Heart right ventricle (tissue), 16 donors: ENCODE measurements at regions of chr22 and their contacts with region 1.

Region 1: DNA sequence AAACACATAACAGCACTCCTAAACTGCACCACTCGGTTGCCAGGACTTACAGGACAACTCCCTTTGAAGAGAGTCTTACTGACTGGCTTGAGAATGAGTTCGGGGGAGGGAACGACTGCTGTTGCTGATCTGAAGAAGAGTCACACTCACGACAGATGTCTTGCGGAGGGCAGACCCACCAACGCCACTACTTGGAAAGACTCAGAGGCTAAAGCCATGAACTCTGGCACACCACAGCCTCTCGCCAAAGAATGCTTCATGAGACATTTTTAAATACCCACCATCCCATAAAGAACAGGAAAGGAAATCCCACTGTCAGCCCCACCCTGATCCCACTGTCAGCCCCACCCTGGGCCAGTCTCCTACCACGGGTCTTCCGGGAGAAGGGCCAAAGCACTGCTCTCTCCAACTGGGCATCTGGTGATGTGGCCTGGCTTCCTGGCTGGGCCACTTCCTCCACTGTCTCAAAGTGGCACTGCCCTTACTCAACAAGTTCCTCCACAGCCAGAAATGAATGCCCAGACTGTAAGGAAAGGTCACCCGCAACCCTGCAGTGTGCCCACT is 73.6 kb downstream of the MICAL3 start:
- DNase-seq: peak; percentile 52 to 62
- ATAC-seq: peak; percentile 46 to 79 (median 71)
- H3K4me3 ChIP-seq: no peak overlapping the region
- H3K27ac ChIP-seq: peak overlapping the region; percentile 57 to 88 (median 78)
- H3K4me1 ChIP-seq: peaks cover 21 to 82% (median 62%) of the 10 kb centered on the region in 9 donors
- H3K27me3 ChIP-seq: no peaks in the 10 kb centered on the region
- CTCF ChIP-seq: no peak

Region 2: DNA sequence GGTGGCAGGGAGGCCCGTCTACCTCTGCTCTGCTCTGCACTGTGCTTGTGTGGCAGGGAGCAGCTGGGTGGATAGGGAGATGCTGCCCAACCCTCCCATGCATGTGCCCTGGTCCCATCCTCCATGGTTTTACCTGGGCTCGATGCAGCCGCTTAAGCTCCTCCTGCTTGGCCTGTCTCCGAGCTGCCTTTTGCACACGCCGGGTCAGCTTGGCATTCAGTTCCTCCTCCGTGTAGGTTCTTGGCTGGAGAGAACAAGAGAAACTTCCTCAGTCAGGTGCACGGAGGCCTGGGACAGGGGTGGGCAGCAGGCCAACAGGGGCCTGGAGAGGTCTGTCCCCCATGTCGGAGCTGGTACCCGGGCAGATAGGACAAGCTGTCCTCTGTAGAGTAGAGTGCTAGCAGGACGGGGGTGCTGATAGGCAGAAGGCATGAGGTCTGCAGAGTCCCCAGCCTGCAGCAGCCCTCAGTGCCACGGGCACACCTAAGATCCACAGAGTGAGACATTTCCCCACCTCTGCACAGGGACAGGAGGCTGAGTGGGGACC is 140.1 kb before region 1 on chr22:
- intact Hi-C with region 1: no loop called
- DNase-seq: peak in 1 of 2 donors; percentile 36
- ATAC-seq: peak in 6 of 8 donors; percentile 13 to 81 (median 43)
- H3K4me3 ChIP-seq: no peak overlapping the region
- H3K27ac ChIP-seq: peak overlapping the region in 7 of 10 donors; percentile 12 to 53 (median 45)
- H3K4me1 ChIP-seq: peaks cover 0 to 36% (median 19%) of the 10 kb centered on the region in 9 donors
- H3K27me3 ChIP-seq: no peaks in the 10 kb centered on the region
- CTCF ChIP-seq: no peak

Region 3: GRCh38 chr22:17910561-17911311 is 40.0 kb before region 1 on chr22:
- intact Hi-C with region 1: loop called in 5 of 10 experiments (anchors 5 kb)
- DNase-seq: peak; percentile 69 to 83
- ATAC-seq: peak; percentile 87 to 96 (median 94)
- H3K4me3 ChIP-seq: peak overlapping the region in 2 of 10 donors; percentile 2 to 8
- H3K27ac ChIP-seq: peak overlapping the region; percentile 79 to 96 (median 85)
- H3K4me1 ChIP-seq: peaks cover 17 to 99% (median 69%) of the 10 kb centered on the region in 9 donors
- H3K27me3 ChIP-seq: no peaks in the 10 kb centered on the region
- CTCF ChIP-seq: peak in 8 of 9 donors; percentile 24 to 82 (median 53)

Region 4: GRCh38 chr22:17922925-17923890 is 27.5 kb before region 1 on chr22:
- intact Hi-C with region 1: loop called in 1 of 10 experiments (anchors 2 kb)
- DNase-seq: no peak
- ATAC-seq: no peak
- H3K4me3 ChIP-seq: no peak overlapping the region
- H3K27ac ChIP-seq: peak overlapping the region in 9 of 10 donors; percentile 55 to 96 (median 88)
- H3K4me1 ChIP-seq: peaks cover 16 to 97% (median 70%) of the 10 kb centered on the region in 9 donors
- H3K27me3 ChIP-seq: no peaks in the 10 kb centered on the region
- CTCF ChIP-seq: no peak

Region 5: DNA sequence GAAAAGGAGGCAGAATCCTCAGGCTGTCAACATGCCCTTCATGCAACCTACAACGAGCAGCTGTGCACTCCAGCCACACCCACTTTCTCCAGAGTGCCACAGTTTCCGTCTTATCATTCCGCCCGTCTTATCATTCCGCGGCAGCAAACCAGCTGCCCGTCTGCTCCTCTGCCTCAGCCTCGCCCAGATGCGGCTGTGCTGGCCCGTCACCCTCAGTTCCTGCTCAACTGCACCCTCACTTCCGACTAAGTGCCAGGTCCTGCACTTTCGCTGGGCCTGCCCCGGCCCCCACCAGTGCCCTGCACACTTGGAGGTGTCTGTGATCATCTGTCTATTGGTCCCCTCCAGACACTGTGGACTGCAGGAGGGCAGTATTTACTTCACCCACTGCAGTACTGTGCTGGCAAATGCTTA is 29.9 kb after region 1 on chr22:
- intact Hi-C with region 1: loop called in 1 of 10 experiments (anchors 5 kb)
- DNase-seq: peak in 1 of 2 donors; percentile 33
- ATAC-seq: peak in 7 of 8 donors; percentile 21 to 74 (median 56)
- H3K4me3 ChIP-seq: peak overlapping the region in 5 of 10 donors; percentile 7 to 25 (median 12)
- H3K27ac ChIP-seq: peak overlapping the region in 7 of 10 donors; percentile 7 to 65 (median 36)
- H3K4me1 ChIP-seq: peaks cover 11 to 58% (median 25%) of the 10 kb centered on the region in 9 donors
- H3K27me3 ChIP-seq: no peaks in the 10 kb centered on the region
- CTCF ChIP-seq: no peak

Region 6: GRCh38 chr22:18001040-18001893 is 50.5 kb after region 1 on chr22:
- intact Hi-C with region 1: loop called in 1 of 10 experiments (anchors 10 kb)
- DNase-seq: peak; percentile 90 to 94
- ATAC-seq: peak; percentile 96 to 98 (median 97)
- H3K4me3 ChIP-seq: peak overlapping the region; percentile 57 to 92 (median 76)
- H3K27ac ChIP-seq: peak overlapping the region; percentile 85 to 98 (median 91)
- H3K4me1 ChIP-seq: peaks cover 0 to 53% (median 25%) of the 10 kb centered on the region in 9 donors
- H3K27me3 ChIP-seq: peaks cover 0 to 12% (median 0%) of the 10 kb centered on the region in 7 donors
- CTCF ChIP-seq: peak in 8 of 9 donors; percentile 21 to 67 (median 52)